WTC11 (cell line): ENCODE measurements at regions of chr16 and their contacts with region 1.

Region 1: GRCh38 chr16:22206013-22206841 is at the start of gene EEF2K:
- DNase-seq: peak; percentile 88
- ATAC-seq: peak; percentile 88
- H3K4me3 Mint-ChIP-seq: peak within 1 kb of the TSS; percentile 96
- H3K27ac Mint-ChIP-seq: peak within 1 kb of the TSS; percentile 69
- H3K4me1 Mint-ChIP-seq: peaks cover 21% of the 10 kb centered on the region
- H3K27me3 Mint-ChIP-seq: no peaks in the 10 kb centered on the region
- CTCF ChIP-seq: peak; percentile 57
- total RNA-seq, gene EEF2K: 23.8 to 27.7 TPM (median 26.7 TPM) in 3 replicates

Region 2: GRCh38 chr16:22161999-22162655 is 44.1 kb before region 1 on chr16 and contains the start of gene SDR42E2:
- CTCF ChIA-PET with region 1: no interaction called
- POLR2A ChIA-PET with region 1: no interaction called
- DNase-seq: peak; percentile 80
- ATAC-seq: peak; percentile 95
- H3K4me3 Mint-ChIP-seq: peak within 1 kb of the TSS; percentile 71
- H3K27ac Mint-ChIP-seq: no peak within 1 kb of the TSS
- H3K4me1 Mint-ChIP-seq: no peaks in the 10 kb centered on the region
- H3K27me3 Mint-ChIP-seq: peaks cover 53% of the 10 kb centered on the region
- CTCF ChIP-seq: no peak
- total RNA-seq, gene SDR42E2: 0.09 to 0.18 TPM (median 0.13 TPM) in 3 replicates

Region 3: DNA sequence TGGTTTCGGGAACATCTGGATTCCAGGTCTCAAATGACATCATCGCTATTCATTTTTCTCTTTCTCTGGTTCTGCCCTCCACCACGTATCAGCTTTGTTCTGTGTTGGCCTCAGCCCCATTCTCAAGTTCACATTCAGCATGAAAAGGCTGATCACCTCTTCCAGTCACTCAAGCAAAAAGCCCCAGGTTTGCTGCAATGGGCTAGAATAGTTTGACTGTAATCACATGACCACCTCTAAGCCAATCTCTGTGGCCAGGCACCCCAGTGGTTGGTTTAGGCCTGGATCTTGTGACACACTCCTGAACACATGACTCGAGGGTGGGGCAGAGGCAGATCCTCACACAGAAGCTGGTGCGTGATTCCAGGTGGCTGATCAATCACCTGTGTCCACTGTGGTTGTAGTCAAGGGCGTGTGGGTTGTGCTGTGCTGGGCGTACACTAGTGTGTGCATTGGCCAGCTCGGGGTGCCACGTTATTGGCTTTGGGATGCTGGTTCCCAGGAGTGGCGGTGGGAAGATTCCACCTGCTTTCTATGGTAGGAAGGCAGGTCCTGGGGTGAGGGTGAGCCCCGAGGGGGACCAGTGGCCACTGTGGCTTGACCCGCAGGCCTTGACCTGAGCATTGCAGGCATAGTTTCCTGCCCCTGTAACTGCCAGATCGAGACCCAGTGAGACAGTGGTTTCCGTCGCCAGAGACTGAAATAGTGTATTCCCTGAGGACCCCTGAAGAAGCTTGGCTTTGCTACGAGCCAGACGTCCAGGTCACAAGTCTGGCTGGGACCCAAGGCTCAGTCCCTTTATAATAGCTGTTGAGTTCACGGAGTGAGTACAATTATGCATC is 11.9 kb after region 1 on chr16:
- CTCF ChIA-PET with region 1: interaction called, 16 read pairs
- POLR2A ChIA-PET with region 1: interaction called, 3 read pairs
- DNase-seq: no peak
- ATAC-seq: peak; percentile 80
- H3K4me3 Mint-ChIP-seq: no peak overlapping the region
- H3K27ac Mint-ChIP-seq: peak overlapping the region; percentile 65
- H3K4me1 Mint-ChIP-seq: peaks cover 5% of the 10 kb centered on the region
- H3K27me3 Mint-ChIP-seq: no peaks in the 10 kb centered on the region
- CTCF ChIP-seq: no peak

Region 4: GRCh38 chr16:22300427-22301071 is 94.3 kb after region 1 on chr16:
- CTCF ChIA-PET with region 1: interaction called, 26 read pairs
- POLR2A ChIA-PET with region 1: interaction called, 3 read pairs
- DNase-seq: peak; percentile 57
- ATAC-seq: peak; percentile 14
- H3K4me3 Mint-ChIP-seq: peak overlapping the region; percentile 26; the same call in 1 of the 2 replicates
- H3K27ac Mint-ChIP-seq: peak overlapping the region; percentile 76
- H3K4me1 Mint-ChIP-seq: peaks cover 26% of the 10 kb centered on the region
- H3K27me3 Mint-ChIP-seq: no peaks in the 10 kb centered on the region
- CTCF ChIP-seq: peak; percentile 31; the same call in 1 of the 2 replicates